Mammary epithelial cell (primary cell): ENCODE measurements at regions of chr6 and their contacts with region 1.

Region 1: DNA sequence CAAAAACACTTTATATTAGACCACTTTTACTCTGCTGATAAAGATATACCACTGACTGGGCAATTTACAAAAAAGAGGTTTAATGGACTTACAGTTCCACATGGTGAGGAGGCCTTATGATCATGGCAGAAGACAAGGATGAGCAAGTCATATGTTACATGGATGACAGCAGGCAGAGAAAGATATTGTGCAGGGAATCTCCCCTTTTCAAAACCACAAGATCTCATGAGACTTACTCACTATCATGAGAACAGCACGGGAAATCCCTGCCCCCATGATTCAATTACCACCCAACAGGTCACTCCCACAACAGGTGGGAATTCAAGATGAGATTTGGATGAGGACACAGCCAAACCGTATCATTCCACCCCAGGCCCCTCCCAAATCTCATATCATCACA is 1383.8 kb upstream of the MAP3K7 start:
- DNase-seq: no peak
- H3K4me3 ChIP-seq: no peak overlapping the region
- H3K27ac ChIP-seq: no peak overlapping the region
- H3K4me1 ChIP-seq: no peaks in the 10 kb centered on the region
- H3K27me3 ChIP-seq: no peaks in the 10 kb centered on the region
- CTCF ChIP-seq: no peak

Region 2: GRCh38 chr6:91781946-91782345 is 188.8 kb before region 1 on chr6:
- CTCF ChIA-PET with region 1: no interaction called
- dilution Hi-C with region 1: no loop called
- in situ Hi-C with region 1: no loop called
- intact Hi-C with region 1: no loop called
- DNase-seq: no peak
- H3K4me3 ChIP-seq: no peak overlapping the region
- H3K27ac ChIP-seq: no peak overlapping the region
- H3K4me1 ChIP-seq: no peaks in the 10 kb centered on the region
- H3K27me3 ChIP-seq: no peaks in the 10 kb centered on the region
- CTCF ChIP-seq: peak in 1 of 2 donors; percentile 15

Region 3: GRCh38 chr6:91982559-91982958 is 11.9 kb after region 1 on chr6:
- CTCF ChIA-PET with region 1: no interaction called
- dilution Hi-C with region 1: no loop called
- in situ Hi-C with region 1: no loop called
- intact Hi-C with region 1: loop called (anchors 1 kb)
- DNase-seq: no peak
- H3K4me3 ChIP-seq: no peak overlapping the region
- H3K27ac ChIP-seq: no peak overlapping the region
- H3K4me1 ChIP-seq: no peaks in the 10 kb centered on the region
- H3K27me3 ChIP-seq: no peaks in the 10 kb centered on the region
- CTCF ChIP-seq: no peak

Region 4: DNA sequence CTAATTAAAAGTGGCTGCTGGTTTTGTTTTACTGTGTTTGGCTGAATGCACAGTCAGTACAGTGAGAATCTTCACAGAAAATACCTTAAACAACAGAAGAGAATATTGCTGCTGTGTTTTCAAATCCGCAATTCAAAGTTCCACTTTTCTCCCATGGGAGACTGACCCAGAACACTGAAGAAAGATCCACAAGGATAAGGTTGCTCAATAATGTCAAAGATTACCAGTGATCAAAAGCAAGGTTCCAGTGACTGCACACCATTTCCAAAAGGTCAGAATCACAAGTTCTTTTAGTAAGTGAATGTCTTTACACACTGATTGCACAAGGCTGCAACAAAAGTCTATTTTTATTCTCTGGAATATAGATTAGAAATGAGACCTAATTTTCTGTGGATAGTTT is 1366.3 kb after region 1 on chr6:
- CTCF ChIA-PET with region 1: no interaction called
- dilution Hi-C with region 1: no loop called
- in situ Hi-C with region 1: no loop called
- intact Hi-C with region 1: no loop called
- DNase-seq: no peak
- H3K4me3 ChIP-seq: no peak overlapping the region
- H3K27ac ChIP-seq: no peak overlapping the region
- H3K4me1 ChIP-seq: no peaks in the 10 kb centered on the region
- H3K27me3 ChIP-seq: no peaks in the 10 kb centered on the region
- CTCF ChIP-seq: no peak